CD4-positive, alpha-beta memory T cell (primary cell): ENCODE measurements at regions of chr22 and their contacts with region 1.

Region 1: DNA sequence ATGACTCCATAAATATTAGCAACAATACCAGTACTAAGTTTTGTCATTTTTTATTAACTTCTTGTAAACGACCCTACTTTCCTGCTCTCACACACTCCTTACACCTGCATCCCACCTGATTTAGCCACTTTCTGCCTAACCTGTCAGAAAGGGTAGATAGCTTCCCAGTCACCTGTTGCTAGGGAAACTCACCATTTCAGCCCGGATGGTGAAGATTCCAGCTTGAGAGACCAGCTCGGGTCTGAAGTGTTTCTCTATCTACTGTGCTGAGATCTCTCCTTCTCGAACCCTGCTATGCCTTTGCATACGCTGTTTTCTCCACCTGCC is at the start of gene PARVG:
- DNase-seq: peak; percentile 63 to 77 (median 67)
- H3K4me3 ChIP-seq: peak within 1 kb of the TSS; percentile 95 to 96
- H3K4me3 Mint-ChIP-seq: peak within 1 kb of the TSS; percentile 82 to 92 (median 89)
- H3K27ac ChIP-seq: peak within 1 kb of the TSS; percentile 81
- H3K27ac Mint-ChIP-seq: peak within 1 kb of the TSS; percentile 86 to 98 (median 95)
- H3K4me1 ChIP-seq: peaks cover 29% of the 10 kb centered on the region
- H3K4me1 Mint-ChIP-seq: peaks cover 16 to 35% (median 27%) of the 10 kb centered on the region in 4 donors
- H3K27me3 ChIP-seq: no peaks in the 10 kb centered on the region
- H3K27me3 Mint-ChIP-seq: no peaks in the 10 kb centered on the region
- total RNA-seq, gene PARVG: 191 to 194 TPM

Region 2: GRCh38 chr22:44192098-44192810 is 11.6 kb after region 1 on chr22:
- CTCF ChIA-PET with region 1: interaction called, 3 read pairs
- POLR2A ChIA-PET with region 1: interaction called, 31 read pairs
- intact Hi-C with region 1: no loop called
- DNase-seq: peak in 3 of 5 donors; percentile 18 to 27 (median 19)
- H3K4me3 ChIP-seq: no peak overlapping the region
- H3K4me3 Mint-ChIP-seq: no peak overlapping the region
- H3K27ac ChIP-seq: no peak overlapping the region
- H3K27ac Mint-ChIP-seq: no peak overlapping the region
- H3K4me1 ChIP-seq: peaks cover 37% of the 10 kb centered on the region
- H3K4me1 Mint-ChIP-seq: peaks cover 23 to 37% (median 28%) of the 10 kb centered on the region in 4 donors
- H3K27me3 ChIP-seq: no peaks in the 10 kb centered on the region
- H3K27me3 Mint-ChIP-seq: no peaks in the 10 kb centered on the region

Region 3: DNA sequence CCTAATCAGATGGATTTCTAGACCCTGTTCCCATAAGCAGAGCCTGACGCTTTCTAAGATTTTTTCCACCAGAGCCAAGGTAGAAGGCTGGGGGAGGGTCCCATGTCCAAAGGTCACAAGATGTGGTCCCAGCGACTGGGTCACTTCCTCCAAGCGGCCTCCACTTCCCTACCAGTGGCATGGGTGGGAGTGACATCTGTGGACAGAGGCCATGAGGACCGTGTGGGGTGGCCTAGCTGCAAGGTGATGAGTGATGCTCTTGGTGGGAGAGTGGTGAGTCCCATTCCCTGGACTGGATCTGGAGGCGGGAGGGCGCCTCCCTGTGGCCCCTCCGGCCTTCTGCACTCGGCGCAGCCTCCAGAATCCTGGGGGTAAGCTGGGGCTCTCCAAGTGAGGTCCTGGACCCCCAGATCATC is 488.9 kb after region 1 on chr22:
- CTCF ChIA-PET with region 1: no interaction called
- POLR2A ChIA-PET with region 1: no interaction called
- intact Hi-C with region 1: loop called (anchors 5 kb)
- DNase-seq: no peak
- H3K4me3 ChIP-seq: peak overlapping the region; percentile 42 to 49
- H3K4me3 Mint-ChIP-seq: peak overlapping the region; percentile 61 to 78 (median 72)
- H3K27ac ChIP-seq: peak overlapping the region; percentile 49
- H3K27ac Mint-ChIP-seq: peak overlapping the region in 6 of 7 donors; percentile 15 to 72 (median 45)
- H3K4me1 ChIP-seq: peaks cover 58% of the 10 kb centered on the region
- H3K4me1 Mint-ChIP-seq: peaks cover 24 to 67% (median 48%) of the 10 kb centered on the region in 4 donors
- H3K27me3 ChIP-seq: no peaks in the 10 kb centered on the region
- H3K27me3 Mint-ChIP-seq: no peaks in the 10 kb centered on the region

Region 4: DNA sequence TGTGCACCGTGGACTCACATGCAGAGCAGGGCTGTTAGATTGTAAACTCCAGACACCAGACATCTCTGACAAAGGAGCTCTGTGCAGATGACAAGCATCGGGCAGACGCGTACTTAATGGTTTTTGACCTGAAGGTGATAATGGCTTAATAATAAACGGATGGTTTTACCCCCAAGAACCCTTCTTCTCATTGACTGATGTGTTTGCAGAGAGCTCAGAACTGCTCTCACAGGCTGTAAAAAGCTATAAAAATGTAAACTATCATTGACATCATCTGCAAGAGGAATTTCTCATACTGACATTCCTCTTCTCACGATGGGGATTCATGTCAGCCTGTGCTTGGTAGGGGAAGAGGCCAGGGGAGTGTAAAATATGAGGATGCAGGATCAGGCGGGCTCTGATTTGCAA is 563.1 kb after region 1 on chr22:
- CTCF ChIA-PET with region 1: no interaction called
- POLR2A ChIA-PET with region 1: no interaction called
- intact Hi-C with region 1: no loop called
- DNase-seq: no peak
- H3K4me3 ChIP-seq: no peak overlapping the region
- H3K4me3 Mint-ChIP-seq: no peak overlapping the region
- H3K27ac ChIP-seq: no peak overlapping the region
- H3K27ac Mint-ChIP-seq: peak overlapping the region in 1 of 7 donors; percentile 22
- H3K4me1 ChIP-seq: no peaks in the 10 kb centered on the region
- H3K4me1 Mint-ChIP-seq: no peaks in the 10 kb centered on the region
- H3K27me3 ChIP-seq: no peaks in the 10 kb centered on the region
- H3K27me3 Mint-ChIP-seq: peaks cover 12% of the 10 kb centered on the region in 2 donors